GM18951 (cell line): ENCODE measurements at regions of chr9 and their contacts with region 1.

Region 1: GRCh38 chr9:36560857-36561221 is 11.9 kb upstream of the MELK start:
- POLR2A ChIP-seq: no peak

Region 2: GRCh38 chr9:36407122-36407723 is 153.6 kb before region 1 on chr9:
- in situ Hi-C with region 1: loop called (anchors 5 kb)
- POLR2A ChIP-seq: no peak

Region 3: DNA sequence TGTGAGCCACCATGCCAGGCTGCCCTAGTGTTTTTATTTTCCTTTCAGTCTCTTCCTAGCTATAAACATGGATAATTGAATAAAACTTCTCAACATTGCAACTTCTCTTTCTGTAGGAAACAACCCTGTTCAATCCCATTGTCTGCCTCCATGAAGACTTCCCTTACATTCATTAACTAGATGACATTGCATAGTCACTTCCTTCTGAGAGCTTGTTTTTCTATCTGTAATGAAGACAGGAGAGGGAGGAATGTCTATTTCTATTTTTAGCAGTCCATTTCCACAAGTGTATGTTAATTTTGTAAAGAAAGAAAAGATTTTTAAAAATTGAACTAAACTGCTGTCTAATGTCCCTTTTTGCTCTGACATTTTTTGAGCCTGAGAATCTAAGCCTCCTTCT is 43.7 kb before region 1 on chr9:
- in situ Hi-C with region 1: loop called (anchors 5 kb)
- POLR2A ChIP-seq: no peak